Sigmoid colon (tissue), 7 donors: ENCODE measurements at regions of chr7 and their contacts with region 1.

Region 1: DNA sequence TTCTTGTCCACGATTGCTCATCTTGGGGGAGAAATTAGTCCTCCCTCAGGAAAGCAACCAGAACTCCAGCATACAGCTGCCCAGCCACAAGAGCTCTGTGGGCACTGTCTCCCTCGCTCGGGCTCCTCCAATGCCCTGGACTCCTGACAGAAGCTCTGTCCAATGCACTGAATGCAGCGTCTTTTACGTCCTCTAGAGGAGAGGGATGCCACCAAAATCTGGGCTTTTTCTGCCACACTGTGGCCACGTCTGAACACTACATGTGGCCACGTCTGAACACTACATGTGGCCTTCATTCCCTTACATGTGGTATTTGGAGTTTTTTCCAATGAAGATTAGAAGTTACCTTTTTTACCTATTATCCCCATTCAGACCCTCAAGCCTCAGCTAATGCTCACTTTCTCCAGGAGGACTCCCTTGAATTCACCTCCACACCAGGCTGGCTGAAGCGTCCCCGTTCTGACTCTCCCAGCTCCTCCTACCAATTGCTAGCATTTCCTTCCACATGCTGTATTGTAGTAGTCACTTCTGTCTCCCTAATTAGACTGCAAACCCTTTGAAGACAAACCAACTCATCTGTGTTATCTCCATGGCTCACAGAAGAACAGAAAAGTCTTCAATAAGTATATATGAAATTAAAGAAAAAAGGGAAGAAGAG is 134.3 kb upstream of the PDE1C start:
- DNase-seq: peak; percentile 75
- H3K4me3 ChIP-seq: peak overlapping the region in 3 of 4 donors; percentile 25 to 33 (median 30)
- H3K27ac ChIP-seq: no peak overlapping the region
- H3K4me1 ChIP-seq: peaks cover 0 to 6% (median 0%) of the 10 kb centered on the region in 4 donors
- H3K27me3 ChIP-seq: no peaks in the 10 kb centered on the region
- CTCF ChIP-seq: peak; percentile 78 to 91 (median 80)
- EP300 ChIP-seq: no peak
- POLR2A ChIP-seq: no peak

Region 2: DNA sequence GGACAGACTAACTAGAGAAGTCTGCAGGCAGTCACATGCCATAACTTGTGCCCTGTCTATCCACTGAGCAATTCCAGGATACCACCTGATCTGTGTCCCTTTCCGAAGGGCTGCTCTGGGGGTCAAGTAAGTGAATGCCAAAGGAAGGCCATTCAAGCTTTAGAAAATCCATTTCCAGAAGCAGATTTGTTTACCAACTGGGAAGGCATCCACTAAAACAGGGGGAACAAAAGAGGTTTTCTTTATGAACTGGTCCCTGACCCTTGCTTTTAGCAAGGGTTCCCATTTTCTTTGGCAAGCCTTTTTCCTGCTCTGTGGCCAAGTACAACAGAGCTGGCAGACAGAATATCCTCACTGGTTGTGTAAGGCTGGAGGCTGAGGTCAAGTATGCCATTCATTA is 654.1 kb before region 1 on chr7:
- intact Hi-C with region 1: no loop called
- DNase-seq: no peak
- H3K4me3 ChIP-seq: no peak overlapping the region
- H3K27ac ChIP-seq: no peak overlapping the region
- H3K4me1 ChIP-seq: no peaks in the 10 kb centered on the region
- H3K27me3 ChIP-seq: no peaks in the 10 kb centered on the region
- CTCF ChIP-seq: no peak
- EP300 ChIP-seq: no peak
- POLR2A ChIP-seq: no peak

Region 3: DNA sequence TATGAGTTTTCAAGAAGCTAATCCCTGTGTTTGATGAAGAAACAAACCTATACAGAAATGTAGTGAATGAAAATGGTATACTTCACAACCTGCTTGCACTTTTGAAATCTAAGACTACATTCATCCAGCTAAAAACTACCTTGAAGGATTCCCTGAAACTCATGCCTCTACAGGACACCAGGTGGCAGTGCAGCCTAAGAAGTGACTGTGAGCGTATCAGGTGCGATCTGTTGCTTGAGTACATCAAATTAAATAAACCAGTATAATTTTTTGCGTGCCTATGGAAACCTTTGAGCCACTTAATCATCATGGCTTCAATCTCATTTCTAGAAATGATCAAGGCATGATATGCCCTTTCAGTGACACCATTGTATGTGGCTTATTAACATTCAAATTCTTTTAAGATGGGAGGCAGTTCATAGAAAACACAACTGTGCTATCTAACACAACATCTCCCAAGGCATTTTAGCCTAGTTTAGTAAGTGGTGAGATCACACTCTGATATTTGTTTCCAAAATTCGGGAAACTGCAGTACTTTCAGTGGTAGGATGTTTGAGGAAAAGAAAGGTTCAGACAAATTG is 460.1 kb before region 1 on chr7:
- intact Hi-C with region 1: loop called (anchors 1 kb)
- DNase-seq: peak; percentile 76
- H3K4me3 ChIP-seq: no peak overlapping the region
- H3K27ac ChIP-seq: no peak overlapping the region
- H3K4me1 ChIP-seq: no peaks in the 10 kb centered on the region
- H3K27me3 ChIP-seq: peaks cover 0 to 4% (median 0%) of the 10 kb centered on the region in 3 donors
- CTCF ChIP-seq: peak; percentile 52 to 86 (median 80)
- EP300 ChIP-seq: no peak
- POLR2A ChIP-seq: no peak

Region 4: GRCh38 chr7:32062150-32062549 is 142.3 kb before region 1 on chr7:
- intact Hi-C with region 1: loop called (anchors 10 kb)
- DNase-seq: peak; percentile 66
- H3K4me3 ChIP-seq: no peak overlapping the region
- H3K27ac ChIP-seq: no peak overlapping the region
- H3K4me1 ChIP-seq: peaks cover 0 to 21% (median 18%) of the 10 kb centered on the region in 4 donors
- H3K27me3 ChIP-seq: no peaks in the 10 kb centered on the region
- CTCF ChIP-seq: peak in 2 of 4 experiments; percentile 13 to 38
- EP300 ChIP-seq: no peak
- POLR2A ChIP-seq: no peak

Region 5: DNA sequence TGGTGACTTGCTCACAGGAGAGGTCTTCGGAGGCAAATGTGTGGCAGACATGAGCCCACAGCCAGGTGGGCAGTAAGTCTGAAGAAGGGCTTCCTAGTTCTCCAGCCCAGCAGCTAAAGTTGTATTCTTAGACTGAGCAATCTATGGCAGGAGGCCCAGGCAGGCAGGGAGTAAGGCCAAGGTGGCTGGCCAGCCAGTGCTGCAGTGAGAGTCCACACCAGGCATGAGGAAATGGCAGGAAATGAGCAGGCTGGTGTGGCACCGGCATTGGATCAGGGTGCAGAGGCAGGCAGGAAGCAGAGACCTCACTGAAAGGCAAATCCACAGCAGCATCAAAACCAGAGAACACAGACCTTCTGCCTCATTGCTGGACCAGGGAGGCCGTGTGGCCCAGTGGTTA is 49.7 kb before region 1 on chr7:
- intact Hi-C with region 1: no loop called
- DNase-seq: no peak
- H3K4me3 ChIP-seq: no peak overlapping the region
- H3K27ac ChIP-seq: no peak overlapping the region
- H3K4me1 ChIP-seq: peaks cover 0 to 6% (median 0%) of the 10 kb centered on the region in 4 donors
- H3K27me3 ChIP-seq: no peaks in the 10 kb centered on the region
- CTCF ChIP-seq: no peak
- EP300 ChIP-seq: no peak
- POLR2A ChIP-seq: no peak

Region 6: DNA sequence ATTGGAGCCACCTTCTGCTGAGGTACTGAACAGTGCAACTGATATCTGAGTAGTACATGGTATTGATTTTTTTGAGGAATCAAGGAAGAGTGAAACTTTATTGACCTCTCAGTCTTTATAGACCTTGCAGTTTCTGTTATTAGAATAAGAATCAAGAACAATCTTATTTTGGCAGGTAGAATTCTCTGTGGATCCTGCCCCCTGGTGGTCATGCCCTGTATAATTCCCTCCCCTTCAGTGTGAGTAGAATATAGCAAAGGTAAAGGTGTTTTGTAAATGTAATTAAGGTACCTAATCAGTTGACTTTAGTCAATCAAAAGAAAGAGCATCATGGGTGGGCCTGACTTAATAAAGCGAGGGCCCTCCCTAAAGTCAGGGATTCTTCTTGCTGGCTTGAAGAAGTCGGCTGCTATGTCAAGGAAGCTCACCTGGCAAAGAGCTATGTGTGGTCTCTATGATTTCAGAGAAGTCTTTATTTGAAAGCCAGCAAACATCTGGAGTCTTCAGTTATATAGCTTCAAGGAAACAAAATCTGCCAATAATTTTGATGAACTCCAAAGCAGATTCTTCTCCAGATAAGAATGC is 142.8 kb after region 1 on chr7:
- intact Hi-C with region 1: loop called (anchors 2 kb)
- DNase-seq: no peak
- H3K4me3 ChIP-seq: no peak overlapping the region
- H3K27ac ChIP-seq: no peak overlapping the region
- H3K4me1 ChIP-seq: no peaks in the 10 kb centered on the region
- H3K27me3 ChIP-seq: no peaks in the 10 kb centered on the region
- CTCF ChIP-seq: peak in 3 of 4 experiments; percentile 44 to 63 (median 46)
- EP300 ChIP-seq: no peak
- POLR2A ChIP-seq: no peak